ENCODE measurements at regions of chr6 and their contacts with region 1.

Region 1: GRCh38 chr6:33744001-33744848 is 2.5 kb downstream of the IP6K3 start:
- DNase-seq: peak; percentile 87
- CTCF ChIP-seq: peak; percentile 93

Region 2: GRCh38 chr6:33585403-33586107 is 158.7 kb before region 1 on chr6:
- CTCF ChIA-PET with region 1: interaction called, 11 read pairs
- POLR2A ChIA-PET with region 1: no interaction called
- DNase-seq: peak; percentile 87
- CTCF ChIP-seq: peak; percentile 99

Region 3: DNA sequence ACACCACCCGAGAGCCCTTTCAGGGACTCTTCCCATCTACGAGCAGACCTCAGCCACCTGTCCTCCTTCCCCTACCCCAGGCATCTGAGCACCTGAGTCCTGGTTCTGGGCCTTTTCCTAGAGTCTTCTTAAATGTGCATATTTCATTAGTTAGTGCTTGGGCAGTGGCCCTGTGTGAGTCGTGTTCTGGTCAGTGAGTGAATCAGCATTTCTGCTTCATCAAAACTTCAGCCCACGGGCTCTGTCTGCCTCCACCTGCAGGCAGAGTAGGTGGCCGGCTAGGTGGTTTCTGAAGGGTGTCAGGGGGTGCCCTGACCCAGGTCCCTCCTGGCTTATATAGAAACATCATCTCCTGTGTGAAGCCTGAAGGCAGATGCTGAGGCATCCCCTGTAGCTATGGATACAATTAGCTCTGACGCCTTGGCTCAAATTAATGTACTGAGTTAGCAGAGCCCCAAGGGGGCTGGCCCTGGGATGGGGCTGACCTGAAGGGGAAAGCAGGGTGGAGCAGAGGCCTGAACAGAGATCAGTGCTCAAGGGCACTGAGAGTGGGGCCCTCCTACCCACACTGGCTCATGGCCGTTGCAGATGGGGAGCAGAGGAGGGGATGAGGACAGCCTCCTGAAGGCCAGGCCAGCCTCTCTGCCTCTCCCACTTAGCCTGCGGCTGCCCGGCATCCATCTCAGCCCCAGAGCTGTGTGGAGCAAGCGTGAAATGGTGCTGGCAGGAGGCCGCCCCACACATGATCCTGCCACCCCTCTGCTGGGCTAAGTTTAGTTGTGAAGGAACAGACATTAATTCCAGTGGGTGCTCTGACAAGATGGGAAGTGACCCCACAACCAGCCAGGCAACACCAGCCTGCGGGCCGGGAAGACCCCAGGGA is 11.2 kb before region 1 on chr6:
- CTCF ChIA-PET with region 1: interaction called, 15 read pairs
- POLR2A ChIA-PET with region 1: no interaction called
- DNase-seq: no peak
- CTCF ChIP-seq: no peak

Region 4: DNA sequence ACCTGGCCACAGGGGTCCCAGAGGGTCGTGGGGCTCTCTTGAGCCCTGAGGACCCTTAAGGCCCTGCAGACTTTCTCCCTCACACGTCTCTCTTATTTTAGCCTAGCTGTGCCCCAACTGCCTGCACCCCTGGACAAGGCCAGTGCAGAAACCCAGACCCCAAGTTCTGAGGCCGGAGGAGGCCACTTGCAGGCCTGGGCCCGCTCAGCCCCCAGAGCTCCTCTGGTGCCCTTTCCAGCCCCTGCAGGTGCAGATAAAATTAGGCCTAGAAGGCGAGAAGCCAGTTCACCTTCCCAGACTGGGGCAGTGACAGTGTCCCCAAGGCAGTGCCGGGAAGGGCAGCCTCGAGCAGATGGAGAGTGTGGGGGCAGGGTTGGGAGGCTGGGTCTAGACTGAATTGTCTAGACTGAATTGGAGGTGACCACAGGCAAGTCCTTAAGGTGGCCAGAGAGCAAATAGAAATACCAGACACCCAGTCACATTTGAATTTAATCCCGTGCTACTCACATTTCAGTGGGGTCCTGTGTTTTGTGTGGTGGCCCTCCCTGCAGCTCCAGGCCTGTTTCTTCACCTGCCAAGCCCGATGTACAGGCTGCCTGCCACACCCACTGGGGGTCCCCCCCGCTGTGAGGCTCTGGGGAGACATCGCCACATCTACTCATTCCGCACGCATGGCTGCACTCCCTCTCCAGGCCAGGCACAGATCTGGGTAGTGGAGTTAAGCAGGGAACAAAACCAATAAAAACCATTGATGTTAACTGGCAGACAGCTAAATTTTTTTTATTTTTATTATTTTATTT is 11.0 kb after region 1 on chr6:
- CTCF ChIA-PET with region 1: interaction called, 24 read pairs
- POLR2A ChIA-PET with region 1: no interaction called
- DNase-seq: no peak
- CTCF ChIP-seq: no peak

Region 5: DNA sequence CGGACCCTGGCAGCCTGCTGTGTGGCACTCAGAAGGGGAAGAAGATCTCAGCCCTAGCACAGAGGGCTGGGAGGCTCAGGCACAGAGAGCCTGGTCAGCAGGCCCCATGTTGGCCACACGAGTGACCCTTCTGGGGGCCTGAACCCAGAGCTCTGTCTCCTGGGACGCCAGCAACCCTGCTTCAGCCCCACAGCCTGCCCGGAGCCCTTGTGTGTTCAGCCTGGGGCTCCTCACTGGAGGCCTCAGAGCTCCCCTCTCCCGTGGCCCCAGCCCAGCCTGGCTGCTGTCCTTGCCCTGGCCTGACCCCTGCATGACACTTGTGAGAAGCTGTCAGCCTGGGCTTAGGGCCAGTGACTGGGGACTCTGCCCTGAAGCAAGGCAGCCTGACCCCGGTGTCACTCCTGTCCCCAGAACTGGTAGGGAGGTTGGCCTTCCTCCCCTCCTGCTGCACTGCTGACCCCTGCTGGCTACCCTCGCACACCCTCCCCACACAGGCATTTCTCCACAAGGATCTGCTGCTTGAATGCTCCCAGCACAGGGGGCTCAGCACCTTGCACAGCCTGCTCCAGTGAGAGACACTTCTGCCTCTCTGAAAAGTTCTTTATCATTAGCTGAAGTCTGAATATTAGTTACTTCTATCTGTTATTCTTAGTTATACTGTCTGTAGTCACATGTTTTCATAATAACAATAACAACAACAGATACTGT is 17.9 kb after region 1 on chr6:
- CTCF ChIA-PET with region 1: interaction called, 24 read pairs
- POLR2A ChIA-PET with region 1: no interaction called
- DNase-seq: peak; percentile 64
- CTCF ChIP-seq: peak; percentile 62

Region 6: GRCh38 chr6:33771146-33772081 is 27.2 kb after region 1 on chr6:
- CTCF ChIA-PET with region 1: interaction called, 11 read pairs
- POLR2A ChIA-PET with region 1: no interaction called
- DNase-seq: peak; percentile 86
- CTCF ChIP-seq: peak; percentile 91

Region 7: GRCh38 chr6:33988121-33989015 is 244.1 kb after region 1 on chr6:
- CTCF ChIA-PET with region 1: no interaction called
- POLR2A ChIA-PET with region 1: no interaction called
- DNase-seq: no peak
- CTCF ChIP-seq: no peak

Region 8: DNA sequence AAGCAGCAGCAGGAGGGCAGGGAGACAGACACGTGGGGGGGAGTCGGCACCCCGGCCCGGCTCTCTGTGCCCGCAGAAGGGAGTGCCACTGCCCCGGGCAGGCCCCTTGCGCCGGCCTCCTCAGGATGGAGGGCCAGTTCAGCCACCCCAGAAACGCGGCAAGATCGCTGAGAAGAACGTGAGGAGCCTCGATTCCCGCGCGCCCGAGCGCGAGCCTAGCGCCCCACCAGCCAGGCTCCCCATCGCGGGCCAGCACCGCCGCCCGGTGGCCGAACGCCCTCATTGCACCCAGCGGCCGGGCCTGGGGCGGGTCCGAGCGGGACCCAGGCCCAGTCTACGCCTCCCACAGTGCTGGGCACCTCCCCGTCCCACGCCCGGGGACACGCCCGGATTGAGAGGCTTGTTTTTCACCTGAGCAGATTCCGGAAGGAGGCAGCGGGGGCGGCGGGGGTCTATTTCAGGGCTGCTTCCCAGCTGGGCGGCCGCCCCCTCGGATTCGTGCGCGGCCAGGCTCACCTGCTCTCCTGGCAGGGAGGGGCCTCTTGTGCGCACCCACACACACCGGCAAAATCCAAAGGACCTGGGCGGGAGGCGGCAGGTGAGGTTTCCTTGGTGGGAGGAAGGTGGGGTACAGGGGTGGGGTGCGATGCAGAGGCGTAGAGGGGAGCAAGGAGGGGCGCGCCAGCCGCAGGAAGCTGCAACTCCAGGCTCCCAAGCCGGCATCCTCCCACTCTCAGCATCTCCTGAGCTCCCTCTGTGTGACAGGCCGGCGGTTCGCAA is 410.6 kb after region 1 on chr6:
- CTCF ChIA-PET with region 1: interaction called, 17 read pairs
- POLR2A ChIA-PET with region 1: no interaction called
- DNase-seq: peak; percentile 89
- CTCF ChIP-seq: peak; percentile 91